Heart left ventricle (tissue), 16 donors: ENCODE measurements at regions of chr6 and their contacts with region 1.

Region 1: GRCh38 chr6:7725849-7726415 is at the start of gene BMP6:
- DNase-seq: peak; percentile 87 to 92 (median 90)
- ATAC-seq: peak; percentile 87 to 96 (median 94)
- H3K4me3 ChIP-seq: peak within 1 kb of the TSS; percentile 31 to 80 (median 66)
- H3K27ac ChIP-seq: peak within 1 kb of the TSS in 2 of 12 donors; percentile 14 to 27
- H3K4me1 ChIP-seq: peaks cover 0 to 44% (median 26%) of the 10 kb centered on the region in 12 donors
- H3K27me3 ChIP-seq: peaks cover 21 to 72% (median 33%) of the 10 kb centered on the region in 9 donors
- CTCF ChIP-seq: peak in 1 of 12 donors; percentile 7
- POLR2A ChIP-seq: peak in 1 of 2 donors; percentile 35
- total RNA-seq, gene BMP6: 1.4 to 5.1 (median 2.9) TPM

Region 2: DNA sequence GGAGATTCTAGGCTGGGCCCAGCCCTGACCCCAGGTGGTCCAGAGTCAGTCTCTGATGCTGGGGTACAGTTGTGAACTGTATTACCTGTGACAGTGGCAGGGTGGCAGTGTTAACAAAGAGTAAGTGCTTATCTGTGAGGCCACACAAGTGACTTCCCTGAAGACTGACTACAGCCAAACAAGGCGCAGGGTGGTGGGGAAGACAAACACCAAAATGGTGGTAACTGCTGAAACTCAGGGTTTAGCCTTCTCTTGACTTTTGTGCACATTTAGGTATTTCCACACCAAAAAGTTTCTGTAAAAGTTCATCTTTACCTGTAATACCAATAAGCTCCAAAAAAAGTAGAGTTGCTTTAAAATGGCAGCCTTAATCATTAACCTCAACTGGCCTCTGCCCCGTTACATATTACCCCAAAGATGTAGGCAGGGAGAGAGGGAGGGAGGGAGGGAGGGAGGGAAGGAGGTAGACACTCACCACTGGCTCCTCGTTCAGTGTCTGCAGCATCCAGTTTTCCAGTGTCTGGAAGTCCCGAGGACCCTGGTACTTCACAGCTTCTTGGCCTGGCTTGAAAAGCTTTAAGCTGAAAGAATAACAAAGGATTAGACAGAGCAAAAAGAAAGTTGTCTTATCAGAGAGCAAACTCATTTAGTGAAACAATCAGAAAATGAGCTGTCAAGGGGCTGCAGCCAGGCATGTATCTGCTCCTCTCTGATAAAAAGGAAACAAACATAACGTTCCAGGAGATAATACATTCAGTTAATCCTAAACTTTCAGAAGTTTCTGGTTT is 173.4 kb after region 1 on chr6:
- intact Hi-C with region 1: loop called in 1 of 10 experiments (anchors 10 kb)
- DNase-seq: no peak
- ATAC-seq: peak in 2 of 4 donors; percentile 13 to 17
- H3K4me3 ChIP-seq: no peak overlapping the region
- H3K27ac ChIP-seq: no peak overlapping the region
- H3K4me1 ChIP-seq: peaks cover 0 to 11% (median under 1%) of the 10 kb centered on the region in 12 donors
- H3K27me3 ChIP-seq: no peaks in the 10 kb centered on the region
- CTCF ChIP-seq: peak in 2 of 12 donors; percentile 6 to 14
- POLR2A ChIP-seq: no peak

Region 3: DNA sequence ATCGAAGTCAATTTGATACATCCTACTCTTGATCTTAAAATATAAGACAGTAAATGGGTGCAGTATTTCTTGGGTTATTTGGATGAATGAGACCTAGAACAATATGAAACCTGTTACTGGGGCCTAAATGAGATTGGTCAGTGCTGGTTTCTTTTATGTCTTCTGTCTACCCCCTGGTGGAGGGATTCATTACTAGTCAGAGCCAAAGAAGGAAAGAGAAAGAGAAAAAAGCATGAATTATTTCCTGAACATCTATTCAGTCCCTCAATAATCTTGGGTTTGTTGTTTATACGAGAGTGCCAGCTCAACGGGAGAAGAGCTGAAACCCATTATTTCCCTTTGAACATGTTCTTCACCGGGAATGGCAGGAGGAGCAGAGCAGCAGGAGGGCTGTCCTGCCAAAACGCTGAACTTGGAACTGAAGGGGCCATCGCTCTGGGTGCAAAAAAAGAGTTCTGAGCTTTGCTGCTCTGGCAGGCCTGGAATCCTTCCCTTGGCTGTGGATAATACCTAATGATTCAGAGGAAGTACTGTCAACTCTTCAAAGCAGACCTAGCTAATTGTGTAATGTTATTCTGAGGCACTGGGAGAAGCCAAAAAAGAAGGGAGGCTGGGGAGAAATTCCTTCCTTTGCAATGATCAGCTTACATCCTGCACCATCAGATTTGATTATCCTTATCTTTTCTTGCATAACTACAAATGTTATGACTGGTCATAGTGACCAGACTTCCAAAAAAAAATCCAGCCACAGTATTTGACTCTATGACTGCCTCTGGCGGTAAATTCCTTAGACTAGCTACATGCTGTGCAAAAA is 266.3 kb after region 1 on chr6:
- intact Hi-C with region 1: loop called in 6 of 10 experiments (anchors 2 to 5 kb)
- DNase-seq: peak in 3 of 5 donors; percentile 23 to 35 (median 30)
- ATAC-seq: peak; percentile 55 to 89 (median 82)
- H3K4me3 ChIP-seq: no peak overlapping the region
- H3K27ac ChIP-seq: peak overlapping the region in 6 of 12 donors; percentile 5 to 46 (median 25)
- H3K4me1 ChIP-seq: peaks cover 0 to 27% (median 7%) of the 10 kb centered on the region in 12 donors
- H3K27me3 ChIP-seq: no peaks in the 10 kb centered on the region
- CTCF ChIP-seq: peak; percentile 24 to 58 (median 46)
- POLR2A ChIP-seq: no peak

Region 4: DNA sequence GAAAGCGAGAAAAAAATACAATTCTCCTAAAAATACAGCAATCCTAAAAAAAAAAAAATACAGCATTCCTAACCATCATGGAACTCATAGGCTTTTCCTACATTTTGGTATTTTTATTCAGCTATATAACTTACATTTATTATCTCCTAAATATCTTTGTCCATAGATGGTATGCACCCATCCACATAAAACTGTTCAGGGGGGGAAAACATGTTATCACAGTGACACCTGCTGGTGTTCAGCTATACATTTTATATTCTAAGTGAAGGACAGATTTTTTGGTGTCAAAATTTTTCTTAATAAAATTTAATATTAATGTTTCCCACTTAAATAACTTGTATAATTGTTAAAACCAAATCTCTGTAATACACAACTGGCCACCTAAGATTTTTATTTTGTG is 280.3 kb after region 1 on chr6:
- intact Hi-C with region 1: loop called in 9 of 10 experiments (anchors 2 to 5 kb)
- DNase-seq: no peak
- ATAC-seq: peak in 2 of 4 donors; percentile 60 to 73
- H3K4me3 ChIP-seq: no peak overlapping the region
- H3K27ac ChIP-seq: no peak overlapping the region
- H3K4me1 ChIP-seq: peaks cover 0 to 3% (median 0%) of the 10 kb centered on the region in 12 donors
- H3K27me3 ChIP-seq: no peaks in the 10 kb centered on the region
- CTCF ChIP-seq: peak; percentile 27 to 65 (median 56)
- POLR2A ChIP-seq: no peak

Region 5: DNA sequence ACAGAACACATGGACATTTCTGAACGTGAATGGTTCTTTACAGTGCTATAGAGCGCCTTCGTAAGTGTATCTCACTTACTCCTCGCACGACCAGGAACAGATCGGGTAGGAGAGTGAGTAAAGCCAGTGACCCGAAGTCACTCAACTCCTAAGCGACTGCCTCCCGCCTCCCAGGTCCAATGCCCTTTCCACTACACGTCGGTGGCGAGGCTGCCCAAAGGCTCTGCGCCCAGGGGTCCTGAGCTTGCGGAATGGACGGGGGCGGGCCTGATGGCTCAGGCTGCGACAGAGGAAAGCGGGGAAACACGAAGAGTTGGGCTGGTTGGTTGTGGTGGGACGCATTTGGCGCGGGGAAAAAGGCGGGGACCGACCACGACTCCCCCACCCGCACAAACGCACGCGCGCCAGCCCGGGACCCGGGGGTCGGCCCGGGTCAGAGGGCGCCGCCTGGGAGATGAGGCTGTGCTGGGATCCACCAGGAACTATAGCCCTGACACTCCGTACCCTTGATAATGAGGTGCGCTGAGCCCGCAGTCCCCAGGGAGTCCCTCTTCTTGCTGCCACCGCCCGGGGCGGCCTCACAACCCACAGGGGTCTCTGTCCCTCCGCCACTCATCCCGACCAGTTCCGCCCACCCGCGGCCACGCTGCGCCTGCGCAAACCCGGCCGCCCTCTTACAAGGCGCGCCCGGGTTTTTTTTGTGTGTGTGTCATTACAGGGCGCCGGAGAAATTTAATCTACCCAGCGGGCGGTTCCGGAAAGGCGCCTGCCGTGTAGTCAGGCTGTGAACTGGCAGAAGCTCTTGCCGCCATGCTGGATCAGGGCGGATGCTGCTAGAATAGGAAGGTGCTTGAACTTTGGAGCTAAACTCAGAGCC is 338.1 kb after region 1 on chr6 and contains the start of gene BLOC1S5:
- intact Hi-C with region 1: loop called in 8 of 10 experiments (anchors 2 to 5 kb)
- DNase-seq: peak; percentile 97 to 98 (median 97)
- ATAC-seq: peak; percentile 97 to 99 (median 98)
- H3K4me3 ChIP-seq: peak within 1 kb of the TSS; percentile 53 to 92 (median 88)
- H3K27ac ChIP-seq: peak within 1 kb of the TSS; percentile 72 to 92 (median 90)
- H3K4me1 ChIP-seq: peaks cover 0 to 21% (median 7%) of the 10 kb centered on the region in 12 donors
- H3K27me3 ChIP-seq: no peaks in the 10 kb centered on the region
- CTCF ChIP-seq: peak in 3 of 12 donors; percentile 5 to 25 (median 19)
- POLR2A ChIP-seq: peak in 1 of 2 donors; percentile 82
- total RNA-seq, gene BLOC1S5: 6.9 to 15.2 (median 8.8) TPM

Region 6: GRCh38 chr6:8229915-8230756 is 504.2 kb after region 1 on chr6:
- intact Hi-C with region 1: loop called in 1 of 10 experiments (anchors 10 kb)
- DNase-seq: no peak
- ATAC-seq: no peak
- H3K4me3 ChIP-seq: no peak overlapping the region
- H3K27ac ChIP-seq: no peak overlapping the region
- H3K4me1 ChIP-seq: no peaks in the 10 kb centered on the region
- H3K27me3 ChIP-seq: peaks cover 0 to 4% (median 0%) of the 10 kb centered on the region in 9 donors
- CTCF ChIP-seq: no peak
- POLR2A ChIP-seq: no peak